ENCODE measurements at regions of chr19 and their contacts with region 1.

Region 1: DNA sequence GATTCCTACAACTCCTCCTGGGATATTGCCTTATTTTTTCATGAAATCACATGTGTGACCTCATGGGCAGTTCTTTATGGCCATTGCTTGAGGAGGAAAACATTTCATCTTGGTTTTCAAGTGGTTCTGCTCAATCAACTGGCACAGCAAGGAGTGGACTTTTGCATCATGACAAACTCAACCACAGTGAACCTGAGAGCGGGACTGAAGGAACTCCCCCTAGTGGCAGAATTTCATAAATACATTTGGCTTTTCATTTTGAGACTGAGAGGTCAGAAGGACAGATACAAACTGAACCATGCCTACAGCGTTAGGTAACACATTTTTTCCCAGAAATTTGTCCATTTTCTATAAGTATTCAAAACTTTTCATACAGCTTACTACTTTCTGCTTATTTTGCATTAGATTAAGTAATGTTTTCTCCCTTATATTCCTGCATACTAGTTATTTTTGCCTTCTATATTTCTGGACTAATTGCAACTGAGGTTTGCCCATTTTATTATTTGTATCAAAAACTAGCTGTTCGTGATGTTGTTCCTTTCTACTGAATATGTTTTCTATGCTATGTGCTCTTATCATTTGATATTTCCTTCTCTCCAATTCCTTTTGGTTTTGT is 13.4 kb upstream of the SIGLEC12 start:
- DNase-seq: peak; percentile 33
- H3K4me3 Mint-ChIP-seq: no peak overlapping the region
- H3K27ac Mint-ChIP-seq: no peak overlapping the region
- H3K4me1 Mint-ChIP-seq: no peaks in the 10 kb centered on the region
- H3K27me3 Mint-ChIP-seq: peaks cover 25% of the 10 kb centered on the region

Region 2: GRCh38 chr19:51460164-51460992 is 54.6 kb before region 1 on chr19:
- CTCF ChIA-PET with region 1: no interaction called
- DNase-seq: no peak
- H3K4me3 Mint-ChIP-seq: no peak overlapping the region
- H3K27ac Mint-ChIP-seq: no peak overlapping the region
- H3K4me1 Mint-ChIP-seq: no peaks in the 10 kb centered on the region
- H3K27me3 Mint-ChIP-seq: peaks cover 58% of the 10 kb centered on the region

Region 3: DNA sequence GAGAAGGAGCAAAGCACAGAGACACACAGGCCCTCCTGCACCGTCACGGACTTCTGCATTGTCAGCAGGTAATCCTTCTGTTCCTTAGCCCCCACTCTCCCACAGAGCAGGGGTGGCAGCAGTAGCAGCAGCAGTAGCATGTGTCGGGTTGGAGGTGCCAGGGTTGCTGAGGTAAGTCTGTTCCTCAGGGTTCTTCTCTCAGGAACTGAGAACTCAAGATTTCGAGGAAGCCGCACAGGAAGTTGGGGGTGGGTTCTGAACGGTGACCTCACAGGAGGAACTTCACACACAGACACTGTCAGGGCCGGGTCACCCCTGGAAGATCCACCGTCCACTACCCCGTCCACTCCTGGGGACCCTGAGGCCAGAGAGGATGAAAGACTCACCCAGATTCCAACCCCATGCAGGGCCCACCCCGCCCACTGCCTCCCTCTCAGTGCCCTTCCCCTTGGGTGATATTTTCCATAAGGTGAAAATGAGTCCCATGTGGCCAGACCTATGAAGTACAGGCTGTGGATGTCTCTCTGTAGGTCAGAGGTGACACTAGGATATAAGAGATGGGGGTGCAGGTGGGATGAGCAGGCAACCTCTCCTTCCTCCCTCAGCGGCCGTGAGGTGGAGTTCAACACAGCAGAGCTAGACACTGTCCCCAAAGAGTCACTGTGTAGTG is 13.2 kb before region 1 on chr19 and contains the start of gene SIGLEC12:
- CTCF ChIA-PET with region 1: interaction called, 10 read pairs
- DNase-seq: peak; percentile 32
- H3K4me3 Mint-ChIP-seq: no peak within 1 kb of the TSS
- H3K27ac Mint-ChIP-seq: no peak within 1 kb of the TSS
- H3K4me1 Mint-ChIP-seq: peaks cover 16% of the 10 kb centered on the region
- H3K27me3 Mint-ChIP-seq: peaks cover 22% of the 10 kb centered on the region

Measured in activated naive CD4-positive, alpha-beta T cell treated with anti-CD3 and anti-CD28 coated beads, Interleukin-2, amount 10 ng/mL, durations not matched to agents 7 days and 5 days (primary cell).